ENCODE measurements at regions of chr12 and their contacts with region 1.

Region 1: DNA sequence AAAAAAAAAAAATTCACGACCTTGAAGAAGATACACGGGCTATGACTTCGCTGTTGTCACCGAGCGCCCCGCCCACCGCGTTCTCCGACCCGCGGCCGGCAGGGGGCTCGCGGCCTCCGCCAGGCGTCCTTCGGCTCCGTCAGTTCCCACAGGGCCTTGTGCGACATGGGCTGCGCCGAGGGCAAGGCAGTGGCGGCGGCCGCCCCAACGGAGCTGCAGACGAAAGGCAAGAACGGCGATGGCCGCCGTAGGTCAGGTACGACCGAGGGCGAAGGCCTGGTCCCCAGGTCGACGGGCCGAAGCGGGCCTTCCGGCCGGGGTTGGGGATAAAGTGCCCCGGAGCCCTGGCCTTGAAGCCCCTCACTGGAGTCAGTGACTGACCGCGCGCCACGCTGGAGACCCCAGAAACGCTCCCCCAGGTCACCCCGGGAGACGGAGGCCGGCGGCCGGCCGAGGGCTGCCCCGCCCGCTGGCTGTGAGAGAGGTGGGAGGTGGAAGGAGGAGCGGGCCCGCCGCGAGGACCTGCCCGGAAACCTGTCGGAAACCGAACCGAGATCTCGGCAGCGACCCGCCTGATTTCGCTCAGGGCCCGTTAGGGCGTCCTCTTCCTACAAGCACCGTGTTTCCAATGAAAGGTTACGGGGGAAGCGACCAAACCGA is at the start of gene TXNRD1:
- DNase-seq: peak; percentile 70 to 84 (median 81)
- ATAC-seq: peak; percentile 97
- H3K4me3 ChIP-seq: peak within 1 kb of the TSS; percentile 69
- H3K4me3 Mint-ChIP-seq: peak within 1 kb of the TSS; percentile 79 to 89 (median 84)
- H3K27ac ChIP-seq: peak within 1 kb of the TSS; percentile 64
- H3K27ac Mint-ChIP-seq: peak within 1 kb of the TSS; percentile 64 to 86 (median 72)
- H3K4me1 ChIP-seq: peaks cover 0 to 5% of the 10 kb centered on the region in 2 donors
- H3K4me1 Mint-ChIP-seq: peaks cover 15 to 41% (median 26%) of the 10 kb centered on the region in 7 donors
- H3K27me3 ChIP-seq: no peaks in the 10 kb centered on the region
- H3K27me3 Mint-ChIP-seq: peaks cover 0 to 8% (median 0%) of the 10 kb centered on the region in 5 donors
- total RNA-seq, gene TXNRD1: 19.1 to 73.5 (median 41.7) TPM

Region 2: DNA sequence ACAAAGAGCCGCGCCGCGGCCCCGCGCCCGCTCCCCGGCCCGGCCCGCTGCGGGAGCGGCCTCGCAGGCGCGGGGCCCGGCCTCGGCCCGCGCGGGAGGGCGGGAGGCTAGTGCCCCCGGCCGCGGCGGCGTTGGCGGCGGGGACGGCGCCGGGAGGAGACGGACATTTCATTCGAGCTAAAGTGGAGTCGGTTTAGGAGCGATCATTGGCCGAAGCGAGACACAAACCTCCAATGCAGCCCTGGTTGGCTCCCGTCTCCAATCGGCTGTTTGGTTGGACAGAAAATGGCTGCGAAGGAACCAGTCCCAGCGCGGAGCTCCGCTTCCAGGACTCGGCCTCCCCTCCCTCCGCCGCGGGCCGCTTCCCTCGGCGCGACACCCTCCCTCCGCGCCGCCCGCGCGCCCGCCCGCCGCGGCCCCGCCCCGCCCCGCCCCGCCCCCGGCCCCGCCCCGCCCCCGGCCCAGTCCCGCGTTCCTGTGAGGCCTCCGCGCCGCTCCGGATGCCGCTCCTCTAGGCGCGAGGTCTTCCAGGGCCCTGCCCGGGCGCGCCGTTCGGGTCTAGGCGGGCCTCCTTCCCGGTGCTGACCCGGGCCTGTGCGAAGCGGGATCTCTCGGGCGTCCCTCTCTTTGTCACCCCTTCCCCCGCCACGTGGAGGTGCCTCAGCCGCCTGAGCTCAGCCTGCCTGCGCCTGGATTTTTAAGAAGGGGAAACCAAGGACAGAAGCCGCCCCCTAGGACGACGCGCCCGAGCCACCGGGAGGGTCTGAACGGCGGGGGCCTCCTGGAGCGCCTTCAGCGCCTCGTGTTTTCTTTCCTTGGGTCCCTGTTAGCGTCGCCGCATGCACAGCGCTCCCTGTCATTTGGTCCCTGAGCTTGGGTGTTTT is 77.6 kb before region 1 on chr12 and contains the start of gene NFYB:
- CTCF ChIA-PET with region 1: no interaction called
- POLR2A ChIA-PET with region 1: no interaction called
- intact Hi-C with region 1: loop called in 1 of 2 experiments (anchors 5 kb)
- DNase-seq: peak; percentile 90 to 96 (median 94)
- ATAC-seq: peak; percentile 97
- H3K4me3 ChIP-seq: peak within 1 kb of the TSS; percentile 69
- H3K4me3 Mint-ChIP-seq: peak within 1 kb of the TSS; percentile 81 to 93 (median 90)
- H3K27ac ChIP-seq: peak within 1 kb of the TSS; percentile 72
- H3K27ac Mint-ChIP-seq: peak within 1 kb of the TSS; percentile 71 to 95 (median 89)
- H3K4me1 ChIP-seq: peaks cover 10 to 23% of the 10 kb centered on the region in 2 donors
- H3K4me1 Mint-ChIP-seq: peaks cover 0 to 22% (median 9%) of the 10 kb centered on the region in 7 donors
- H3K27me3 ChIP-seq: no peaks in the 10 kb centered on the region
- H3K27me3 Mint-ChIP-seq: peaks cover 0 to 24% (median 0%) of the 10 kb centered on the region in 5 donors
- total RNA-seq, gene NFYB: 11.6 to 25.9 (median 24.4) TPM

Region 3: DNA sequence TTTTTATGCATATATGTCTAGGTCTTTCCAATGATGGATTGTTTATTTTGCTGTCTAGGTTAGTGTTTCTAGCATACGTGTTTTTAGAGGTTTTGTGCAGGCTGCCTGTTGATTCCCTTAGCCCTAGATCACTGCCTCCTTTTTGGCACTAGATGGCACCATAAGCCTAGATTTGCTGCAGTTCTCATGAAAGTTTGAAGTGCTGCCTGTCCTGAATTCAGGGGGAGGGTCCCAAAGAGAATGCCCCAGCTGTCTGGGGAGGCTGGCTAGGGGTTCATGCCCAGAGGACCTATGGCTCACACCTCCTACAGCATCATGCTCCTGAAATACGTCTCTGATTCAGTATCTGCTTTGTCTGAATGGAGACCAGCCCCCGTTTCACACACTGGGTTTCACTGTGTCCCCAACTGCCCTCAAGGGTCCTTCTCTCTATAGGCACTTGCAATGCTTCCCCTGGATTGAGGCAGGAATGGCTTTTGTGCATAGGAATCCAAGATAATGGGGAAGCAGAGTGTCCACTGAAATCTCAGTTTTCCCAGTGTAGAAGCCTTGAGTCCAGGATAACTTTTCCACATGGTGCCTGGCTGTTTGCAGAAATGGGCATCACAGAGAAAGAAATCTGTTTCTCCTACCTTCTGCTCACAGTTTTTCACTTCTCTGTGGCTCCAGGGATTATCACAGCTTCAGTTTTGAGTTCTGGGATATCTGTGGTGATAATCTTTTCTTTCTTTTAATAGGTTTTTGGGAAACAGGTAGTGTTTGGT is 14.3 kb before region 1 on chr12:
- CTCF ChIA-PET with region 1: interaction called, 5 read pairs
- POLR2A ChIA-PET with region 1: no interaction called
- intact Hi-C with region 1: loop called in 1 of 2 experiments (anchors 1 kb)
- DNase-seq: peak; percentile 8 to 72 (median 59)
- ATAC-seq: peak; percentile 78
- H3K4me3 ChIP-seq: no peak overlapping the region
- H3K4me3 Mint-ChIP-seq: peak overlapping the region in 1 of 10 donors; percentile 54
- H3K27ac ChIP-seq: no peak overlapping the region
- H3K27ac Mint-ChIP-seq: no peak overlapping the region
- H3K4me1 ChIP-seq: no peaks in the 10 kb centered on the region
- H3K4me1 Mint-ChIP-seq: peaks cover 0 to 4% (median 3%) of the 10 kb centered on the region in 7 donors
- H3K27me3 ChIP-seq: no peaks in the 10 kb centered on the region
- H3K27me3 Mint-ChIP-seq: peaks cover 5 to 24% (median 9%) of the 10 kb centered on the region in 5 donors

Region 4: DNA sequence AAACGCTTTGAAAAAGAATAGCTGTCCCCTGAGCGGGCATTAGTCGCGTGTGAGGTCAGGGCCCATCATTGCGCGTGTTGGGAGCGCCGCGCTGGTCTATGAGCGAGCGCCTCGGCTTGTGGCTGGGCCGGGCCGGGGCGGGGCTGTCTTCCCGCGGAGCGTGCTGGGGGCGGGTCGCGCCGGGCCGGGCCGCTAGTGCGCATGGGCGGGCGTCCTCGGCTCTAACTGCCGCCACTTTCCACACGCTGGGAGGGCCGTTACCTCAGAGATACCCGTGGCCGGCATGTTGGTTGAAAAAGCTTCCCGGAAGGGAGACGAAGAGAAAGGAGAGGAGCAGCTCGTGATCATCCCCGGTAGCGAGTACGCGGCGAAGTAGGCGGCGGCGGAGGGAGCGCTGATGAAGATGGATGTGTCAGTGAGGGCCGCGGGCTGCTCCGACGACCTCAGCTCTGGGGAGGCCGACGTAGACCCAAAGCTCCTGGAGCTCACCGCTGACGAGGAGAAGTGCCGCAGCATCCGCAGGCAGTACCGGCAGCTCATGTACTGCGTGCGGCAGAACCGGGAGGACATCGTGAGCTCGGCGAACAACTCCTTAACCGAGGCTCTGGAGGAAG is 87.9 kb after region 1 on chr12 and contains the start of gene EID3:
- CTCF ChIA-PET with region 1: interaction called, 7 read pairs
- POLR2A ChIA-PET with region 1: interaction called, 4 read pairs
- intact Hi-C with region 1: loop called (anchors 1 kb)
- DNase-seq: peak; percentile 86 to 96 (median 91)
- ATAC-seq: peak; percentile 99
- H3K4me3 ChIP-seq: peak within 1 kb of the TSS; percentile 56
- H3K4me3 Mint-ChIP-seq: peak within 1 kb of the TSS; percentile 87 to 99 (median 96)
- H3K27ac ChIP-seq: peak within 1 kb of the TSS; percentile 84
- H3K27ac Mint-ChIP-seq: peak within 1 kb of the TSS; percentile 91 to 99 (median 97)
- H3K4me1 ChIP-seq: peaks cover 7 to 24% of the 10 kb centered on the region in 2 donors
- H3K4me1 Mint-ChIP-seq: peaks cover 35 to 72% (median 56%) of the 10 kb centered on the region in 7 donors
- H3K27me3 ChIP-seq: no peaks in the 10 kb centered on the region
- H3K27me3 Mint-ChIP-seq: no peaks in the 10 kb centered on the region
- total RNA-seq, gene EID3: 8.2 to 11.8 (median 10.4) TPM

Region 5: DNA sequence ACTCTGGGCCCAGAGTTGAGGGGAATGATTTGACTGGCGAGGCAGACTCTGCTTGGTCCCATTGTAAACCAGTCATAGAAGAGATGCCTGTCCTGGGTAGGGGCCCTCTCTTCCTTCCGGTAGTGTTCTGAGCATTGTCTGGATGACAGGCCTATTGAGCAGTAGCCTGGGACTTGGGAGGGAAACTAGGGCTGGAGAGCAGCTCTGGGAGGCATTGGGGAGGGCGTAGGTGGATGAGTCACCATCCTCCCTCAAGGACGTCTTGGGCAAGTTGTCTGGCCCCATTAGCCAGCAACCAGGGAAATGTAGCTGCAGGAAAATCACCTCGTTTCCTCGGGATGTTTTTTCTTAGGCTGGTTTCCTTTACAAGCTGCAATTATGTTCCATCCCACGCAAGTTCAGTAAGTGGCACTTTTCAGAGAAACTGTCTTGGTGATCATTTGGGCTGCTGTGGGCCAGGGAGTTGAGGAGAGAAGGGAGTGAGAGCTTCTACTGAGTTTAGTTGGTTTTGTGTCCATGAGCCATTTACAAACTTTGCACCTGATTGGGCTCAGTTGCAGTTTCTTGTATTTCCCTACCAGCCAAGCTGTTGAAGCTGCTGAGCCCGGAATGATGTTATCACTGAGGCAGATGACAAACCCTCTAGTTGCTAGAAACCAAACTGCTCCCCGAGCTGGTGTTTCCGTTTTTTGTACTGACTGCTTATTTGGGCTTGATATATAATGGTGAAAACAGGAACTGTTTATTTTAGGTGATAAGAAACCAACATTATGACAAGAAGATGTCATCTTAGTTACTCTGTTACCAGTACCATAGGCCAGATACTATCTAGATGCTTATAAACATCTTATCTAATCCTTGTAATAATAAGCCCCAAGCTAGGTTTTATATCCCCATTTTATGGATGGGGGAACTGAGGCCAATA is 388.6 kb after region 1 on chr12:
- CTCF ChIA-PET with region 1: no interaction called
- POLR2A ChIA-PET with region 1: no interaction called
- intact Hi-C with region 1: loop called in 1 of 2 experiments (anchors 10 kb)
- DNase-seq: peak in 5 of 9 donors; percentile 7 to 54 (median 13)
- ATAC-seq: peak; percentile 82
- H3K4me3 ChIP-seq: no peak overlapping the region
- H3K4me3 Mint-ChIP-seq: peak overlapping the region in 4 of 10 donors; percentile 23 to 66 (median 28)
- H3K27ac ChIP-seq: no peak overlapping the region
- H3K27ac Mint-ChIP-seq: peak overlapping the region in 8 of 9 donors; percentile 15 to 91 (median 43)
- H3K4me1 ChIP-seq: peaks cover 10 to 16% of the 10 kb centered on the region in 2 donors
- H3K4me1 Mint-ChIP-seq: peaks cover 37 to 79% (median 64%) of the 10 kb centered on the region in 7 donors
- H3K27me3 ChIP-seq: no peaks in the 10 kb centered on the region
- H3K27me3 Mint-ChIP-seq: no peaks in the 10 kb centered on the region

Region 6: DNA sequence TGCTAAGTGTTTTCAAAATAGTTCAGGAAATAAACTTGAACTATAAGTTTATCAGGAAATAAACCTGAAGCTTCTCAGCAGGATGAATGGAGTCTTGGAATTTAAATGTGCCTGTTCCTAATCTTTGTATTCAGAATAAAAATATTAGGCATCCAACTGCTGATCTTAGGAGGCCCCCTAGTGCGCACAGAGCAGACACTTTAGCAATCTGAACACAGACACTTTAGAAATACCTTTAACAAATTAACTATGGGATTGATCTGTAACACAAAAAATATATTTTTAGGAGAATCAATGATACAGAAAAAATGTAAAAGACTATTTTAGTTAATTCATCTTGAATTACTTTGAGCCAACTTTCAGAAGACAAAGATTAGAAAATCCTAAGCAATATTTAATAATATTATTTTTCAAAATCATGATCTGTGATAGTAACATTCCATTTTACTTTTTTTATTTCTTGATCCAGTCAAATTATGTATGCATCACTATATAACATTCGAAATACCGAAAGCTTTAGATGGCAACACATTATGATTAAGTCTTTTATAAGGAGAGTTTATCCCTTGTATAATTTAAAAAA is 661.4 kb after region 1 on chr12:
- CTCF ChIA-PET with region 1: no interaction called
- POLR2A ChIA-PET with region 1: no interaction called
- intact Hi-C with region 1: loop called in 1 of 2 experiments (anchors 1 kb)
- DNase-seq: peak in 7 of 9 donors; percentile 5 to 52 (median 29)
- ATAC-seq: peak; percentile 56
- H3K4me3 ChIP-seq: no peak overlapping the region
- H3K4me3 Mint-ChIP-seq: no peak overlapping the region
- H3K27ac ChIP-seq: no peak overlapping the region
- H3K27ac Mint-ChIP-seq: no peak overlapping the region
- H3K4me1 ChIP-seq: no peaks in the 10 kb centered on the region
- H3K4me1 Mint-ChIP-seq: peaks cover 0 to 9% (median 0%) of the 10 kb centered on the region in 7 donors
- H3K27me3 ChIP-seq: no peaks in the 10 kb centered on the region
- H3K27me3 Mint-ChIP-seq: peaks cover 0 to 12% (median 0%) of the 10 kb centered on the region in 5 donors